Posterior vena cava (tissue), 2 donors: ENCODE measurements at regions of chrX and their contacts with region 1.

Region 1: DNA sequence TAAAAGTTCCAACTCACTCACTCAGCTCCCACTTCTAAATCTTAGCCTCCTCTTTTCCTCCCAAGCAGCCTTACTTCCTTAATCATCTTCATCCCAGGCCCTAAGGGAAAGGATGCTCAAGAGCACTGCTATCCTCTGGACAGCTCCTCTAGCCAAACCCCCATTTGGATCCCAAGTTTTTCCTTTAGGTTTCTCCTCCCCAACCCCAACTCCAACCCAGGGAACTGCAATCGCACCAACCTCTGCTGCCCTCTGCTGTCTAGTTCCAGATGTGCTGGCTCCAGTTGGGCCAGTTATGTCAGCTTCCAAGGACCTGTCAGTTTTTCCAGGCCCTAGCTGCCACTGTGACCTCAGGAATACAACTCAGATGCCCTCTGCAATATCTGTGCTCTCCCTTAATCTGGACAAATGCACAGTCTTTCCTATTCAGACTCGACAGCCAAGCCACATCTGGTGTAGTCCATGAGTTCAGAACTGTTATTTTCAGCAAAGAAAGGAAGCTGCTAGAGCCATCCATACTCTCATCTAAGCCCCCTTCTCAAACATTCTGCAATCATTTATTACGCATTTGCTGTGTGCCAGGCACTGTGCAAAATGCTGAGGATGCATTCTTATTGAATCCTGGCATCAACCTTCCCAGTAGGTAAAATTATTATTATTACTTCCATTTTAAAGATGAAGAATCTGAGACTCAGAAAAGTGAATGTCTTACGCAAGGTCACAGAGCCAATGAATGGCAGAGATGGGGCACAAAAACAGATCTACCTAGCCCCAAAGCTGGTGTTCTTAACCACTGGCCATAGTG is 12.3 kb upstream of the XPNPEP2 start:
- DNase-seq: no peak

Region 2: DNA sequence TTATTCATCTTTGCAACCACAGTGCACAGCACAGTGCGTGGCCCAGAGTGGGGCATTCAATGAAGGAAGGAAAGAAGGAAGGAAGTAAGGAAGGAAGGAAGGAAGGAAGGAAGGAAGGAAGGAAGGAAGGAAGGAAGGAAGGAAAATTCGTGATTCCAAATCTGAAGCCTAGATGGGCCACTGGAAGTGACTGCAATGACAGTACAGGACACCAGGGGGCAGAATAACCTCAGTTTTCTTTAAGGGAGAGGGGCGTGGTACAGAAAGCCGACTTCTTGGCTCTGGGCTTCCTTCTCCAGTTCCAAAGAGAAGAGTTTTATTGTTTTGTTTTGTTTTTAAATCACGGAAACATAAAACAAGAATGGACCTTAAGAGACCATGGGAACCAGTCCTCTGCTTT is 119.6 kb before region 1 on chrX:
- intact Hi-C with region 1: loop called in 1 of 2 experiments (anchors 2 kb)
- DNase-seq: no peak

Region 3: DNA sequence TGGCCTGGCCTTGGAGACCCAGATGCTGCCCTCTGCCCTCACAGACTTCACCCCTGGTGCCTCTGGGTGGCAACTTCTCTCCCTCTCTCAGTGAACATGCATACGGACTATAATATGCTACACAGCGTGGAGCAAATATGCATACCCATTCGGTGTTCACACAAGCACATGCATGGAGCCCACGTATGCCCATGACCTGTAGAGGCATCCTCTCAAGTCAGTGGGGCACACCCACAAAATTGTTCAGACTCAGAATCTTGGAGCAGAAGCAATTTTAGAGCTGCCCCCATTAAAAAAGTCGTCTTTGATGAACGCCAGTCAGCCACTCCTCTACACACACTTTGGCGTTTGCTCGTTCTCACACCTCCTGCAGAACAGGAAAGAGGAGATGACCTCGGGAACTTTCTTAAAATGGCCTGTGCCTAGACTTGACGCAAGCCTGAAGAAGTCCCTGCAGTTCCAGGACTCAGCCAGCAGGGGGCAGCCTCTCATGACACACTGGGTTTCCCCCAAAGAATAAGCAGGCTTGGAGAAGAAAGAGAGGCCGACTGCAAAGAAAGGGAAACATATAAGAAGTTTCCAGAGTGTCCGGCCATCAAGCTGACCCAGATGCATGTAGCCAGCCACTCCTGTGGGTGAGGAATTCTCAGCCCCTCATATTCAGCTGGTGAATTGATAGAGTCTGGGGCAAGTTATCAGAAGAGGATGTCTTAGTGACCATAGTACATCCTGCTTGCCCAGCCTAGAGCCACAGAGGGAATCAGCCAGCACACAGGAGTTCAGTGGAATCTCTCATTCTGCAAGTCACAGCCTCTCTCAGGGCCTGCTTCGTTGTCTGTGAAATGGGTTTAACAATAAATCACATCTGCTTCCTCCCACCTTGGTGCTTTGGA is 89.0 kb before region 1 on chrX:
- intact Hi-C with region 1: loop called (anchors 2 to 5 kb)
- DNase-seq: peak; percentile 91

Region 4: GRCh38 chrX:129642641-129643040 is 83.9 kb before region 1 on chrX:
- intact Hi-C with region 1: loop called (anchors 2 to 5 kb)
- DNase-seq: no peak

Region 5: DNA sequence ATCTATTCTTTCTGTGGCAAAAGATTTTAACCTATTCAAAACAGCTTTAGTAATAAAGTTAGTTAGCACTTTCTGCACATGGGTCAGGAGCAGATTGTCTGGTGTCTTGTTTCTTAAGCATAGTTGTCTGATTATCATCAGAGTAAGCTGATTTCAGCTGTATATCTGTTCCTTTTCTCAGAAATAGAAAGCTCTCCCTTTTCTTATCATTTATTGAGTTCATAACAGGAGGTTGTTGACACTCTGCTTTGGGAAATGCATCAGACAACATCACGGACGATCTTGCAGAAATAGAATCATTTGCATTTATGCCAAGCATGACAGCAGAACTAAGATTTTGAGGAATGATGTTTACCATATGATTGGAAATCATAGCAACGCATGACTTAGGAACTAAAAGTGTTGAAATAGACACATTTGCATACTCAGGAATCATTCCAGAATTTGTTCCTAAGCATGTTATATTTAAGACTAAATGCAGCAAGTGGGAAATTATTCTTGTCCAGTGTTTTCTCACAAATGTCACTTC is 742.0 kb after region 1 on chrX:
- intact Hi-C with region 1: no loop called
- DNase-seq: no peak